Endothelial cell of umbilical vein (primary cell): ENCODE measurements at regions of chr18 and their contacts with region 1.

Region 1: DNA sequence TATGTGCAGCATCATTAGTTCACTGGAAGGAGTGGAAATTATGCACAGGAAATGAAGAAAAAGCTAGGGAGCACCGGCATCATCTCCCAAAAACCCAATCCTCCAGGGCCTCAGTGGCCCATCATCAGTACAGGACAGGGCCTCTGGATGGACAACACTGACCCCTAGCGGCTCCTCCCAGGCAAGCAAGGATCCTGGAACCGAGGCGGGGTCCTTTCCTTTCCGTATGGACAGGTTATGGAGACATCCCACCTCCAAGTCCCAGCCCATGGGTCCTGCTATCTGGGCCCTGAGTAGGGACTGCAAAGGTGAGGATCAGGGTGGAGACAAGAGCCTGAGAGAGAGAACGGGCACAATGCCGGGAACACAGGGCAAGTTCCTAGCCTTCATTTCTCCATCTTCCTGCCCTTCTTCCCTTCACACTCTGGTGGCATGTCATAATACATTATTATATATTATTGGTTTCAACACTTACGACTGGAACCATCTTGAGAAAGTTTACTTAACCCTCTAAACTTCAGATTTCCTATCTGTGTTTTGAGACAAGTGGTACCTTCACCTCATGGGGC is 68.2 kb downstream of the ZNF516 start:
- DNase-seq: no peak
- H3K4me3 ChIP-seq: no peak overlapping the region
- H3K27ac ChIP-seq: no peak overlapping the region
- H3K4me1 ChIP-seq: no peaks in the 10 kb centered on the region
- H3K27me3 ChIP-seq: no peaks in the 10 kb centered on the region
- CTCF ChIP-seq: peak; percentile 76 to 77
- POLR2A ChIP-seq: no peak

Region 2: DNA sequence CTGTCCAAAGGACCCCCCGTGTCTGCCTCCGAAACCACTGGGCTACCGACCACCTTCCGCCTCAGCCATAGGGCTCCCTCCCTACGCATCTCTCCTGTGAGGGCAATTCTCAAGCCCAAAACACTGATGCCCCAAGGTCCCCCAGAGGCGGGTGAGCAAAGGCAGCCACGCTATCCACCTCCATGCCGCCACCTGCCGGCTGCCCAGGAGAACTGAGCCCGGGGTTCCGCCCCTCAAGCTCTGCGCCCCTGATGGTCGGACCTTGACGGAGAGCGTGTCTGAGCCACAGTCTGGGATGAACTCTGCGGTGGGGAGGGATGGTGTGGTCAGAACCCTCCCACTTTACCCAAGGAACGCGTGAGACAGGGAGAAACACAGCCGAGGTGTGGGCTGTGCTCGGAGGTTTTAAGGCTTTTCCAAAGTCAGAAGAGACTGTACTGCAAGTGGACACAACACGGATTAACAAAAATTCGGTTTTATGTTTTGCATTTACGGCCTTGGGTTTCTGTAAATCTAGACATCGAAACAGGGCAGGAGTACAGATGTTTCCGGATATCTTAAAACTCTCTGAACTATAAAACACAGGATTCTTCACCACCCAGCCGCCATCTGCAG is 45.9 kb before region 1 on chr18:
- CTCF ChIA-PET with region 1: no interaction called
- POLR2A ChIA-PET with region 1: no interaction called
- dilution Hi-C with region 1: no loop called
- intact Hi-C with region 1: no loop called
- DNase-seq: no peak
- H3K4me3 ChIP-seq: no peak overlapping the region
- H3K27ac ChIP-seq: no peak overlapping the region
- H3K4me1 ChIP-seq: no peaks in the 10 kb centered on the region
- H3K27me3 ChIP-seq: no peaks in the 10 kb centered on the region
- CTCF ChIP-seq: peak; percentile 52 to 59
- POLR2A ChIP-seq: no peak

Region 3: GRCh38 chr18:76414936-76415621 is 11.7 kb before region 1 on chr18:
- CTCF ChIA-PET with region 1: no interaction called
- POLR2A ChIA-PET with region 1: no interaction called
- dilution Hi-C with region 1: no loop called
- intact Hi-C with region 1: loop called (anchors 1 kb)
- DNase-seq: no peak
- H3K4me3 ChIP-seq: no peak overlapping the region
- H3K27ac ChIP-seq: no peak overlapping the region
- H3K4me1 ChIP-seq: no peaks in the 10 kb centered on the region
- H3K27me3 ChIP-seq: no peaks in the 10 kb centered on the region
- CTCF ChIP-seq: no peak
- POLR2A ChIP-seq: no peak

Region 4: GRCh38 chr18:77679869-77680268 is 1253.0 kb after region 1 on chr18:
- CTCF ChIA-PET with region 1: no interaction called
- POLR2A ChIA-PET with region 1: no interaction called
- dilution Hi-C with region 1: no loop called
- intact Hi-C with region 1: no loop called
- DNase-seq: no peak
- H3K4me3 ChIP-seq: no peak overlapping the region
- H3K27ac ChIP-seq: no peak overlapping the region
- H3K4me1 ChIP-seq: no peaks in the 10 kb centered on the region
- H3K27me3 ChIP-seq: no peaks in the 10 kb centered on the region
- CTCF ChIP-seq: no peak
- POLR2A ChIP-seq: no peak